ENCODE measurements at regions of chr11 and their contacts with region 1.

Region 1: DNA sequence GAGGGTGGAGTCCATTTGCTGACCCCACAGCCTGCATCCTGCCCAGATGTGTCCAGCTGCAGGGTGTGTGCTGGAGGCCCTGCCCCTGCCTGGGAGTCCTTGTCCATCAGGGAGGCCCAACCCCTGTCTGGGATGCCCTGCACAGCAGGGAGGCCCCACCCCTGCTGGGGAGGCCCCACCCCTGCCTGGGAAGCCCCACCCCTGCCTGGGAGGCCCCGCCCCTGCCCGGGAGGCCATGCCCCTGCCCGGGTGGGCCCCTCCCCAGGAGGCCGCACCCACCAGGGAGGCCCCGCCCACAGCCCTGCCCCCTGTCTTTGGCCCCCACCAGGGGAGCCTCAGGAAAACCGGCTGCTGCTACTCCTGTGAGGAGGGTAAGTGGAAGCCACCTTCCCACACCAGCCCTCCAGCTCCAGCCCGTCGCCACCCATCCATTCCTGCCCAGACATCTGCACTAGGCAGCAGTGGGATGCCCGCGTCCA is 37.2 kb downstream of the MUC5B start:
- DNase-seq: no peak
- H3K4me3 ChIP-seq: no peak overlapping the region
- H3K27ac ChIP-seq: no peak overlapping the region
- H3K4me1 ChIP-seq: peaks cover 0 to 12% of the 10 kb centered on the region in 2 donors
- H3K27me3 ChIP-seq: no peaks in the 10 kb centered on the region
- CTCF ChIP-seq: no peak
- POLR2A ChIP-seq: no peak

Region 2: DNA sequence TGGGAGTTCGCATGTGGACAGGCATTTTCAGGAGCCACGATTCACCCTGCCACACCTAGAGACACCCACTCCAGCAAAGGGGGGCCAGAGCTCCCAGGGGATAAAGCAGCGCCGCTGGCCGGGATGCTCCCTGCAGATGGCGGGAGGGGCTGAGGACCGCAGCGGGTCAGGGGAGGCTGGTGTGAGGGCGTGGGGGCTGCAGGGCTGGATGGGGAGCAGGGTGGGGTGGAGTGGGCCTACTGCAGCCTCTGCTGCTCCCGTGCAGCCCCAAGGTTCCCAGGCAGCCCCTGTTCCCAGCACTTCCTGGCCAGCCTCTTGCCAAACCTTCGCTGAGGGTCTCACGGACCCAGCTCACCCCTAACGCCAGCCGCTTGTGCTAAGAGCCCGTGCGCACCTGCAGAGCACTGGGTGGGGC is 24.2 kb before region 1 on chr11:
- intact Hi-C with region 1: loop called (anchors 1 kb)
- DNase-seq: no peak
- H3K4me3 ChIP-seq: no peak overlapping the region
- H3K27ac ChIP-seq: no peak overlapping the region
- H3K4me1 ChIP-seq: no peaks in the 10 kb centered on the region
- H3K27me3 ChIP-seq: peaks cover 0 to 24% of the 10 kb centered on the region in 2 donors
- CTCF ChIP-seq: no peak
- POLR2A ChIP-seq: no peak

Region 3: GRCh38 chr11:1586699-1587098 is 326.6 kb after region 1 on chr11:
- intact Hi-C with region 1: loop called (anchors 1 kb)
- DNase-seq: no peak
- H3K4me3 ChIP-seq: no peak overlapping the region
- H3K27ac ChIP-seq: no peak overlapping the region
- H3K4me1 ChIP-seq: no peaks in the 10 kb centered on the region
- H3K27me3 ChIP-seq: no peaks in the 10 kb centered on the region
- CTCF ChIP-seq: no peak
- POLR2A ChIP-seq: no peak

Measured in breast epithelium (tissue), 4 donors.